ENCODE measurements at regions of chr6 and their contacts with region 1.

Region 1: GRCh38 chr6:37365762-37366161 is 12.0 kb downstream of the RNF8 start:
- DNase-seq: no peak
- ATAC-seq: no peak
- H3K4me3 ChIP-seq: no peak overlapping the region
- H3K27ac ChIP-seq: no peak overlapping the region
- H3K4me1 ChIP-seq: peaks cover 4 to 13% of the 10 kb centered on the region in 2 donors
- H3K27me3 ChIP-seq: no peaks in the 10 kb centered on the region

Region 2: DNA sequence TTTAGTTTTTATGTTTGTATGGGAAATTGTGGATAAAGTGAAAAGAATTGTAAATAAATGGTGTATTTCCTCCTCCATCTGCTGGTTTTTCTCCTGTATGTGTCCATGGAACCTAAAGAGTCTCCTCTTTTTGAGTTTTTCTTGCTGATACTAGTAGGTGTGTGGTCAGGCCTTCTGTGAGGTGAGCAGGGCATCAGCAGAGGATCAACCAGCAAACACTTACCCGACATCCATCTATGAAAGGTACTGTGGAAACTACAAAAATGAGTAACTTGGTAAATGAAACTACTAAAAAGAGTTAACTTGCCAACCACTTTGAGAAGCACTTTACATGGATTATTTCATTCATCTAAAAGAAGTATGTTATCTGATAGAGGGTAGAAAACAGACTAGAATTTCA is 32.9 kb before region 1 on chr6:
- intact Hi-C with region 1: no loop called
- DNase-seq: no peak
- ATAC-seq: no peak
- H3K4me3 ChIP-seq: no peak overlapping the region
- H3K27ac ChIP-seq: no peak overlapping the region
- H3K4me1 ChIP-seq: no peaks in the 10 kb centered on the region
- H3K27me3 ChIP-seq: no peaks in the 10 kb centered on the region

Region 3: GRCh38 chr6:37432916-37433656 is 67.3 kb after region 1 on chr6 and contains the start of gene CMTR1:
- intact Hi-C with region 1: loop called in 1 of 2 experiments (anchors 2 kb)
- DNase-seq: peak; percentile 97 to 99
- ATAC-seq: peak; percentile 99
- H3K4me3 ChIP-seq: peak within 1 kb of the TSS; percentile 75 to 85
- H3K27ac ChIP-seq: peak within 1 kb of the TSS; percentile 83 to 91
- H3K4me1 ChIP-seq: peaks cover 6% of the 10 kb centered on the region in 2 donors
- H3K27me3 ChIP-seq: no peaks in the 10 kb centered on the region
- total RNA-seq, gene CMTR1: 31.5 to 43.1 TPM

Region 4: DNA sequence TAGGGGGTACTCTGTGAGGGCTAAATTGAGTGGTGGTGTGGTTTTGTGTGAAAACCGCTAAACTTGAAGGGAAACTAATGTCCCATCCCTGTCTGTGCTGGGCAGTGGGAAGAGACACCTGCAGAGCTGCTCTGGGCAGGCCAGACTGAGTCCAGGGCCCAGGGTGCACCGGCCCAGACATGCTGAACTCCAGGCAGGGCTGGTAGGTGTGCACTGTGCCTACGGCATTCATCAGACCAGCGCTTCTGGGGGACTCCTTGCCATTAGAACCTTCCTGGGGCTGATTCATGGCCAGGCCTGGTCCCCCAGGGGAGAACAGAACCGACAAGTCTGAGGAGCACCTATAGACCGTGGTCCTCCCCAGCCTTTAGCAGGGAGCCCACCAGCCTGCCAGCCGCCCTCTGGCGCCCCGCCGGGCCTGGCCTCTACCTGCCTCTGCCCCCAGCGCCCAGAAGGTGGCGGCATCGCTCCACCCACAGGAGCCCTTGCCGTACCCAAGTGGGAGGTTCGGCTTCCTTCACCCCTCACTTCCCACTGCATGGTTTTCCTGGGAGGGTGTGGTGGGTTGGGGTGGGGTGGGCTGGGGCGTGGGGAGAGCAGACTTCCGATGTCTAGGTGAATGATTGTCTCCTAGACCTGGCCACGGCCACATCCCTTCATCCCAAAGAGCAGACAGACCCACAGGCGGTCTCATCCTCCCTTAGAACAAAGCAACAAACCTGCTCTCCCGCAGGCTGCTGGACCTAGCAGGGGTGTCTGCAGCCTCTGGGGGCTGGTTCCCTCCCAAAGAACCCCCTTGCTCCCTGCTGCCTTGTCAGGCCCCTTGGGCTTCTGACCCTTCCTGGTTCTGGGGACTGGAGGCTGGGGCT is 118.4 kb after region 1 on chr6:
- intact Hi-C with region 1: loop called in 1 of 2 experiments (anchors 5 kb)
- DNase-seq: peak in 1 of 2 donors; percentile 87
- ATAC-seq: peak; percentile 75
- H3K4me3 ChIP-seq: no peak overlapping the region
- H3K27ac ChIP-seq: no peak overlapping the region
- H3K4me1 ChIP-seq: no peaks in the 10 kb centered on the region
- H3K27me3 ChIP-seq: no peaks in the 10 kb centered on the region

Region 5: GRCh38 chr6:37566111-37566949 is 200.6 kb after region 1 on chr6:
- intact Hi-C with region 1: loop called (anchors 5 to 10 kb)
- DNase-seq: peak; percentile 62 to 88
- ATAC-seq: peak; percentile 84
- H3K4me3 ChIP-seq: peak overlapping the region; percentile 13 to 19
- H3K27ac ChIP-seq: no peak overlapping the region
- H3K4me1 ChIP-seq: no peaks in the 10 kb centered on the region
- H3K27me3 ChIP-seq: no peaks in the 10 kb centered on the region

Measured in aorta (tissue), 5 donors.